ENCODE measurements at regions of chr2 and their contacts with region 1.

Region 1: GRCh38 chr2:237256887-237257286 is 157.1 kb downstream of the COL6A3 start:
- DNase-seq: peak in 1 of 2 donors; percentile 78
- H3K4me3 ChIP-seq: no peak overlapping the region
- H3K27ac ChIP-seq: peak overlapping the region; percentile 75 to 79
- H3K4me1 ChIP-seq: peaks cover 6 to 16% of the 10 kb centered on the region in 2 donors
- H3K27me3 ChIP-seq: no peaks in the 10 kb centered on the region
- CTCF ChIP-seq: no peak

Region 2: DNA sequence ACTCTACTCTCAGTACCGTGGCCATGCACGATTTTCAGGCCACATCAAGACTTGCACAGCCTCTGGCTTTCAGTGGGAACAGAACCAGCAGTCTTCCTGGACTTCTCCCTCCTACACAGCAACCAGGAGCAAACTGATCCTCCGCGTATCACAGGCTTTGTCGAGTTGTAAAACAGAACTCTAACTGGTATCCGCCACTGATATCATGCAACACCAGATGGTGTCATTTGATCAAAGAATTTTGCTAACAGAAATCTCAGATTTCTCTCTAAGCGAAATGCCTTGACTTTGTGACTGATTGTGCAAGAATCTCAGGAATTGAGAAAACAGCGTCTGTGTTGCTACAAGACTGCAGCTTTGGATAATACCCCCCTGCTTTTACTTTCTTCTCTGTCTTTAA is 85.5 kb before region 1 on chr2:
- intact Hi-C with region 1: loop called (anchors 5 kb)
- DNase-seq: no peak
- H3K4me3 ChIP-seq: peak overlapping the region in 1 of 2 donors; percentile 31
- H3K27ac ChIP-seq: peak overlapping the region; percentile 32 to 67
- H3K4me1 ChIP-seq: peaks cover 0 to 6% of the 10 kb centered on the region in 2 donors
- H3K27me3 ChIP-seq: no peaks in the 10 kb centered on the region
- CTCF ChIP-seq: peak in 2 of 3 experiments; percentile 39 to 44

Region 3: DNA sequence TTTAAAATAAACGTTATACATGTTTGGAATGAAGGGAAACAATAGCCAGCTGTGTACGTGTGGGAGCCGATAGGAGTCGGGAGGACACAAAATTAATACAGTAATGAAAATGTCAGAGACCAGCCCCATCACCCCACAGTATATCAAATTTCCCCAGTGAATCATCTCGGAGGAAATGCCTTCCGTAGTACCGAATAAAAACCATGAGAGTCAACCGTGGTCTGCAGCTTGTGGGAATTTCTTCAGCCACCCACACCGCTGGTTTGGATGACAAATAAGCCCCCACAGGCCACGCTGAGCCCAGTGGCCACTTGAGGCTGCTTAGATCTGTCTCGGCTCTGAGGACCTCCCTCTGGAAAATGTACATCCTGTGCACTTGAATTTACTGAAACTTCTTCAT is 23.3 kb after region 1 on chr2:
- intact Hi-C with region 1: no loop called
- DNase-seq: no peak
- H3K4me3 ChIP-seq: no peak overlapping the region
- H3K27ac ChIP-seq: peak overlapping the region in 1 of 2 donors; percentile 13
- H3K4me1 ChIP-seq: peaks cover 0 to 11% of the 10 kb centered on the region in 2 donors
- H3K27me3 ChIP-seq: no peaks in the 10 kb centered on the region
- CTCF ChIP-seq: no peak

Measured in ascending aorta (tissue), 2 donors.